HEK293 (cell line): ENCODE measurements at regions of chr2 and their contacts with region 1.

Region 1: GRCh38 chr2:219402665-219403515 is 15.2 kb upstream of the DNPEP start:
- H3K4me3 ChIP-seq: no peak overlapping the region
- H3K27ac ChIP-seq: no peak overlapping the region
- H3K4me1 ChIP-seq: peaks cover 19% of the 10 kb centered on the region
- CTCF ChIP-seq: peak; percentile 69

Region 2: GRCh38 chr2:219418155-219418569 is 15.3 kb after region 1 on chr2 and contains the start of gene DES:
- CTCF ChIA-PET with region 1: interaction called, 10 read pairs
- POLR2A ChIA-PET with region 1: interaction called, 6 read pairs
- H3K4me3 ChIP-seq: no peak within 1 kb of the TSS
- H3K27ac ChIP-seq: no peak within 1 kb of the TSS
- H3K4me1 ChIP-seq: no peaks in the 10 kb centered on the region
- CTCF ChIP-seq: no peak

Region 3: GRCh38 chr2:219459460-219460311 is 56.8 kb after region 1 on chr2:
- CTCF ChIA-PET with region 1: interaction called, 20 read pairs
- POLR2A ChIA-PET with region 1: no interaction called
- H3K4me3 ChIP-seq: no peak overlapping the region
- H3K27ac ChIP-seq: no peak overlapping the region
- H3K4me1 ChIP-seq: peaks cover 2% of the 10 kb centered on the region; the same call in 1 of the 2 replicates
- CTCF ChIP-seq: peak; percentile 77

Region 4: DNA sequence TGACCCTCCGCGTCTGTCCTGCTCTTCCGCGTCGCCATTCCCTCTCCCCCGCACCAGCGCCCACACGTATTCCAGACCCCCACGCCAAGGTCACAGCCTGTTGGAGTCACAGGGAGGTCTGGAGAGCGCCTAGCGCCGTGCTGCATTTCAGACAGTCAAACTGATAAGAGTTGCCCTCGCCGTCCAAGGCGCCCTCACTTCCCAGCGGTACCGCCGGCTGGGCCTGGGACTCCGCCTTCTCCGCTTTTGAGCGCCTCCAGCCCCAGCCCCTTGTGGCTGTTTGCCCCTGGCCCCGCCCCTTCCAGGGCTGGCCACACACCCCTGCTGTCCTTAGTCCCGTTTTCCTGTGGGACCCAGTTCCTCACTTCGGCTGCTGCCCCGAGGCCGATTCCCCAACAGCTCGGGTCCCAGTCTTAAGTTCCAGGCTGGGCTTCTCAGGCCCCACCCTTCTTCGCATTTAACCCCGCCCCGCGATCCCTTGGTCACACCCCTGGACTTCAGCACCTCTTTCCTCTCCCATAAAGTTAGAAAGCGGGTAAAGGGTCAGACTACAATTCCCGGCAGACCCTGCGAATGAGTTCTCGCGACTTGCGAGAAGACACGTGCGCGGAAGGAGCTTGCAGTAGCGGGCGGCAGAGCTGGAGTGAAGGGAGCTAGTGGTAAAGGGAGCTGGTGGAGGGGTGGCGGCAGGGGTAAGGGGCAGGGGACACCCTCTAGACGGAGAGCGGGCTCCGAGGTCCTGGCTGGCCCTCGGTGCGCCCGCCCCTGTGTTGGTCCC is 95.6 kb after region 1 on chr2 and contains the start of gene GMPPA:
- CTCF ChIA-PET with region 1: interaction called, 11 read pairs
- POLR2A ChIA-PET with region 1: no interaction called
- H3K4me3 ChIP-seq: peak within 1 kb of the TSS; percentile 69
- H3K27ac ChIP-seq: peak within 1 kb of the TSS; percentile 33; the same call in 1 of the 2 replicates
- H3K4me1 ChIP-seq: peaks cover 8% of the 10 kb centered on the region; the same call in 1 of the 2 replicates
- CTCF ChIP-seq: peak; percentile 28; the same call in 1 of the 2 replicates

Region 5: DNA sequence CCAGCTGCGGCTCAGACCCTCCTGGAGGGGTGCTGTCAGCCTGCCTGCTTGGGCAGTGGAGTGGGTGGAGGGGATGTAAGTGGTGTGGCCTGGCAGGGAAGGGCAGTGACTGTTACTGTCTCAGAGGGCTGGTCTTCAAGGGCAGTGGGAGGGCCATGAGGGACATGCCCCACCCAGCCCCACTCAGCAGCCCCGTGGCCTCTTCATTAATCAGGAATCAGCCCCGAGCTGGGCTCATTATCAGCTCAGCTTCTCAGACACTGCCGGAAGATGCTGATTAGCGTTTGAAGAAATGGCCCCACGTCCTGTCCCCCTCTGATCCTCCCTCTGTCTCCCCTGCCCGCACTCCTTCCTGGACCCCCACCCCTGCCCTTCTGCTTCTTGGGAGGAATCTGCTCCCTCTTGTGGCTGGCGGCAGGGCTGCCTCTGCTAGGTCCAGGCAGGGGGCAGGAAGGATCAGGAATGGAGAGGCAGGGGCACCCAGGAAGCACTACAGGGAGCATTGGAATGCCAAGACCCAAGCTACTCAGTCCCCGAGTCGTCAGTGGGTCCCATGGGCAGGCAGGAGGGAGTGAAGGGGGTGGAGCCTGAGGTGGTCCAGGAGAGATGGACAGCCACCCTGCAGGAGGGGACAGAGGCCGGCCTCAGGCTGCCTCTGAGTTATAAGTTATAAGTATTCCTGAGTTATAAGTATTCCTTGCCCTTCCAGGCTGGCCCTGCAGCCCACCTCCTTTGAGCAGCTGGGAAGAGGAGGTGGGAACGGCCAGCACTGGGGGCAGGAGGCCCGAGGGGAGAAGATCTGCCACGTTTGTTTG is 118.4 kb after region 1 on chr2:
- CTCF ChIA-PET with region 1: interaction called, 196 read pairs
- POLR2A ChIA-PET with region 1: no interaction called
- H3K4me3 ChIP-seq: no peak overlapping the region
- H3K27ac ChIP-seq: no peak overlapping the region
- H3K4me1 ChIP-seq: peaks cover 7% of the 10 kb centered on the region
- CTCF ChIP-seq: peak; percentile 85